ENCODE measurements at regions of chr2 and their contacts with region 1.

Region 1: DNA sequence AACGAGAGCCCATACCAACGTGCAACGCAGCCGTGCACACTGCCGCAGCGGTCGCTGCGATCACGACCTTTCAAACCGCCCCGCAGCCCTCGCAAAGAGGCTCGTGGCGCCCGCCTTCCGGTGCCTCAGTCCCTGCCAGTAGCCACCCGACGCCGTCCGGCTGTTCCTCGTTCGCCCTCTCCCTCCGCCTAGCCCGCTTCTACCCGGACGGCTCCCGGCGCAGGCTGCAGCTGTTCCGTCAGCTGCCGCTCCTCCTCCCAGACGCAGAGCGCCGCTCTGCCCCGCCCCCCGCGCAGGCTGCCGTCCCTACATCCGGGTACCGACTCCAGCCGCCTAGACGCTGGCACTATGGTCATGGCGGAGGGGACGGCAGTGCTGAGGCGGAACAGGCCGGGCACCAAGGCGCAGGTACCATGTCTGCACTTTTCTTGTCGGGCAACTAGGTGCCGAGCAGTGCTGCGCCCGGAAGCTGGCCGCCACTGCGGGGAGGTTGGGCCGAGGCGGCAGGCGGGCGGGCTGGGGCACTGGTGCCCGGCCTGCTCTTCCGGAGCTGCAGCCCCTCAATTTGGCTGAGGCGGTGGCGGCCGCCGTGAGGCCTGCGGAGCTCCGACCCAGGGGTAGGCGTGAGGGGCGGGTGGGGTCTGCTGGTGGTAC is at the start of gene MOB4:
- DNase-seq: peak; percentile 98
- ATAC-seq: peak; percentile 95
- H3K4me3 ChIP-seq: peak within 1 kb of the TSS; percentile 79 to 90 (median 85)
- H3K4me3 Mint-ChIP-seq: peak within 1 kb of the TSS; percentile 97
- H3K27ac ChIP-seq: peak within 1 kb of the TSS; percentile 92 to 96
- H3K27ac Mint-ChIP-seq: peak within 1 kb of the TSS; percentile 91
- H3K4me1 ChIP-seq: peaks cover 10 to 17% of the 10 kb centered on the region in 2 donors
- H3K4me1 Mint-ChIP-seq: peaks cover 41% of the 10 kb centered on the region
- H3K27me3 ChIP-seq: no peaks in the 10 kb centered on the region
- H3K27me3 Mint-ChIP-seq: no peaks in the 10 kb centered on the region
- CTCF ChIP-seq: no peak
- total RNA-seq, gene MOB4: 20.1 and 20.8 TPM in 2 replicates

Region 2: DNA sequence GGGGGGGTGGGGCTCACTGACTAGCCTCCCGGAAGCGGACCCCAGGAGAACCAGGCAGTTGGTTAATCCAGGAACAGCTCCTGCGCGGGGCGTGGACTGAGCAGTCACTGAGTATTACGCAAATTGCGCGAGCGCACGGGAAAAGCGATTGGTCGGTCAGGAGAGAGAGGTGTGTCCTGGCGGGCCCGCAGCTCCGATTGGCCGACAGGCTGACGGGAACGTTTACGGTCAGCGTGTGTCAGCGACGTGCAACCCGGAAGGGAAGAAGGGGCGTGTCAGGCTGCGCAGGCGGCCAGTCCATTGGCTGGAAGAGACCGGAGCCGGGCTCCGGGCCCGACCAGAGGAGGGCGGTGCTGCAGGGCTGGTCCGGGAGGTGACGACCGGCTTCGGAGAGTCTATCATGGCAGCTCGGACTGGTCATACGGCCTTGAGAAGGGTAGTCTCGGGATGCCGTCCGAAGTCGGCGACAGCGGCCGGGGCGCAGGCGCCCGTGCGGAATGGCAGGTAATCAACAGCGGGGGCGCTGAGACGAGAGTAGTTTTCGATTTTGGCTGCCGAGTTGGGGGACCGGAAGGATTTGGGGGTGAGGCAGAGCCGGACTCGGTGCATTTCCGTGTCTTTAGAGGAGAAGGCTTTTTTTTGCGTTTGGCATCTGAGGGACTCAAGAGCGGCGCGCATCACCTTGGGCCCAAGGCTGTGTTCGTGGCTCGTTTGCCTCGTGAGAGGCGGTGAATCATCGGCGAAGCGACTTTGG is 62.5 kb before region 1 on chr2 and contains the start of gene COQ10B:
- CTCF ChIA-PET with region 1: no interaction called
- POLR2A ChIA-PET with region 1: interaction called, 9 read pairs
- intact Hi-C with region 1: loop called (anchors 1 kb)
- DNase-seq: peak; percentile 99
- ATAC-seq: peak; percentile 90
- H3K4me3 ChIP-seq: peak within 1 kb of the TSS; percentile 82 to 99 (median 89)
- H3K4me3 Mint-ChIP-seq: peak within 1 kb of the TSS; percentile 99
- H3K27ac ChIP-seq: peak within 1 kb of the TSS; percentile 95 to 96
- H3K27ac Mint-ChIP-seq: peak within 1 kb of the TSS; percentile 99
- H3K4me1 ChIP-seq: peaks cover 17 to 19% of the 10 kb centered on the region in 2 donors
- H3K4me1 Mint-ChIP-seq: peaks cover 42% of the 10 kb centered on the region
- H3K27me3 ChIP-seq: no peaks in the 10 kb centered on the region
- H3K27me3 Mint-ChIP-seq: no peaks in the 10 kb centered on the region
- CTCF ChIP-seq: no peak
- total RNA-seq, gene COQ10B: 29.1 and 29.6 TPM in 2 replicates

Region 3: GRCh38 chr2:197538412-197538811 is 22.5 kb after region 1 on chr2:
- CTCF ChIA-PET with region 1: no interaction called
- POLR2A ChIA-PET with region 1: no interaction called
- intact Hi-C with region 1: no loop called
- DNase-seq: no peak
- ATAC-seq: no peak
- H3K4me3 ChIP-seq: no peak overlapping the region
- H3K4me3 Mint-ChIP-seq: no peak overlapping the region
- H3K27ac ChIP-seq: no peak overlapping the region
- H3K27ac Mint-ChIP-seq: no peak overlapping the region
- H3K4me1 ChIP-seq: no peaks in the 10 kb centered on the region
- H3K4me1 Mint-ChIP-seq: peaks cover 11% of the 10 kb centered on the region
- H3K27me3 ChIP-seq: no peaks in the 10 kb centered on the region
- H3K27me3 Mint-ChIP-seq: no peaks in the 10 kb centered on the region
- CTCF ChIP-seq: no peak